ENCODE measurements at regions of chr20 and their contacts with region 1.

Region 1: GRCh38 chr20:53939572-53940359 is 130.6 kb downstream of the BCAS1 start:
- DNase-seq: peak; percentile 94
- ATAC-seq: peak; percentile 89
- H3K4me3 ChIP-seq: no peak overlapping the region
- H3K27ac ChIP-seq: peak overlapping the region; percentile 66
- H3K4me1 ChIP-seq: peaks cover 16% of the 10 kb centered on the region
- H3K27me3 ChIP-seq: no peaks in the 10 kb centered on the region
- CTCF ChIP-seq: peak; percentile 92
- POLR2A ChIP-seq: 0 out of 2 replicates have a peak, but pooled peaks have one; percentile 61
- RAD21 ChIP-seq: peak; percentile 95

Region 2: DNA sequence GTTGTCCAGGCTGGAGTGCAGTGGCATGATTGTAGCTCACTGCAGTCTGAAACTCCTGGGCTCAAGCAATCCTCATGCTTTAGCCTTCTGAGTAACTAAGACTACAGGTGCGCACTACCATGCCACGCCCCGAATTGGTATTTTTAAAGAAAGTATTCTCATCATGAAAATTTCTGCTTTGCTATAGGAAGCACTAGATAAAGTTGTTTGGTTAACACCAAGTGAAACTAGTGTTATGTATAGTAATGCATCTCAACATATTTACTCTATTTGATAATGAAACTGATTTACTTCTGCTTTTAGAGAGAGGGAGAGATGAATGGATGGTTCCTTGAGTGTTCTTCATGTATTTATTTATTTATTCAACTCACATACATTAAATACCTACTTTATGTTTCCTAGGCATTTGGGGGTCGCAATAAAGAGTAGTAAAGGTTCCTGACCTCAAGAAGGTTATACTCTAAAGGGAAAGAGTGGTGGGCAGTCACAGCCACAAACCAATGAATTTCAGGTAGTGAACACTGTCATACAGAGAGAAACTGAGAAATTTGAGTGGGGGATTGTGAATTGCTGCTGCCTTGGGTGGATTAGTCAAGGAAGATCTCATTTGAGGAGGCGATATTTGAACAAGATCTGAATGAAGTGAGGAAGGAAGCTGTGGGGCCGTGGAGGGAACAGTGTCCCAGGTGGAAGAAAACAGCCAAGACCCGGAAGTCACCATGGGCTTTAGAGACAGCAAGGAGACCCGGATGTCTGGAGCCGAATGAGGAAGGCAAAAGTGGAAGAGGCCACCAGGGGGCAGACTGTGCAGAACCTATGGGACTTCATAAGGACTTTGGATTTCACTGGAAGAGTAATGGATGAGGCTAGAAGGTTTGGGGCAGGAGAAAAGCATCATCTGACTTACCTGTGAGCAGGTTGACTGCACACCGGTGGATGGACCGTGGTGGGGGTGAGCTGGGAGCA is 782.0 kb before region 1 on chr20:
- CTCF ChIA-PET with region 1: no interaction called
- POLR2A ChIA-PET with region 1: no interaction called
- dilution Hi-C with region 1: no loop called
- in situ Hi-C with region 1: loop called (anchors 25 kb)
- intact Hi-C with region 1: no loop called
- DNase-seq: peak; percentile 53
- ATAC-seq: peak; percentile 63; the same call in 1 of the 2 replicates
- H3K4me3 ChIP-seq: no peak overlapping the region
- H3K27ac ChIP-seq: no peak overlapping the region
- H3K4me1 ChIP-seq: no peaks in the 10 kb centered on the region
- H3K27me3 ChIP-seq: no peaks in the 10 kb centered on the region
- CTCF ChIP-seq: peak; percentile 53
- POLR2A ChIP-seq: no peak
- RAD21 ChIP-seq: peak; percentile 48